IMR-90 (cell line): ENCODE measurements at regions of chr1 and their contacts with region 1.

Region 1: GRCh38 chr1:20696397-20697329 is 21.1 kb downstream of the KIF17 start:
- DNase-seq: peak; percentile 94
- ATAC-seq: peak; percentile 92
- H3K4me3 ChIP-seq: peak overlapping the region; percentile 52
- H3K27ac ChIP-seq: peak overlapping the region; percentile 88
- H3K4me1 ChIP-seq: peaks cover 14% of the 10 kb centered on the region
- H3K27me3 ChIP-seq: no peaks in the 10 kb centered on the region
- CTCF ChIP-seq: peak; percentile 82
- POLR2A ChIP-seq: no peak
- RAD21 ChIP-seq: peak; percentile 88

Region 2: DNA sequence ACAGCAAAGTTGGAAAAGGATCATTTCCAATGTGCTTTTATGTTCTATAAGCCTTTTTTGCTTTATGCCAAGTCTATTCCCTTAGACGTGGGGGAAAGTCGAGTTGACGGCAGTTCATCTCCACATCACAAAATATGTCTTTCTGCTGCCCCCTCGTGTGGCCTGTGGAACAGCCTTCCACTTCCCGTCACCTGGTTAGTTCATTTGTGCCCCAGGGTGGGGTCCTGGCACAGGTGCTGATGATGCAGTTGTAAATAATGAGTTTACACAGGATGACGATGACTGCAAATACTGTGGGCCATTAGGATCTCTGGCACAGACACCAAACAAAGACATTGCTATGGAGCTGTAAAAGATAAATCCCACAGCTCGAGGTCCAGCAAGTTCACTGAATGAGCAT is 824.5 kb before region 1 on chr1:
- CTCF ChIA-PET with region 1: no interaction called
- POLR2A ChIA-PET with region 1: no interaction called
- dilution Hi-C with region 1: no loop called
- in situ Hi-C with region 1: no loop called
- intact Hi-C with region 1: no loop called
- DNase-seq: no peak
- ATAC-seq: no peak
- H3K4me3 ChIP-seq: no peak overlapping the region
- H3K27ac ChIP-seq: no peak overlapping the region
- H3K4me1 ChIP-seq: peaks cover 2% of the 10 kb centered on the region; the same call in 1 of the 2 replicates
- H3K27me3 ChIP-seq: peaks cover 2% of the 10 kb centered on the region; the same call in 1 of the 2 replicates
- CTCF ChIP-seq: no peak
- POLR2A ChIP-seq: no peak
- RAD21 ChIP-seq: no peak

Region 3: DNA sequence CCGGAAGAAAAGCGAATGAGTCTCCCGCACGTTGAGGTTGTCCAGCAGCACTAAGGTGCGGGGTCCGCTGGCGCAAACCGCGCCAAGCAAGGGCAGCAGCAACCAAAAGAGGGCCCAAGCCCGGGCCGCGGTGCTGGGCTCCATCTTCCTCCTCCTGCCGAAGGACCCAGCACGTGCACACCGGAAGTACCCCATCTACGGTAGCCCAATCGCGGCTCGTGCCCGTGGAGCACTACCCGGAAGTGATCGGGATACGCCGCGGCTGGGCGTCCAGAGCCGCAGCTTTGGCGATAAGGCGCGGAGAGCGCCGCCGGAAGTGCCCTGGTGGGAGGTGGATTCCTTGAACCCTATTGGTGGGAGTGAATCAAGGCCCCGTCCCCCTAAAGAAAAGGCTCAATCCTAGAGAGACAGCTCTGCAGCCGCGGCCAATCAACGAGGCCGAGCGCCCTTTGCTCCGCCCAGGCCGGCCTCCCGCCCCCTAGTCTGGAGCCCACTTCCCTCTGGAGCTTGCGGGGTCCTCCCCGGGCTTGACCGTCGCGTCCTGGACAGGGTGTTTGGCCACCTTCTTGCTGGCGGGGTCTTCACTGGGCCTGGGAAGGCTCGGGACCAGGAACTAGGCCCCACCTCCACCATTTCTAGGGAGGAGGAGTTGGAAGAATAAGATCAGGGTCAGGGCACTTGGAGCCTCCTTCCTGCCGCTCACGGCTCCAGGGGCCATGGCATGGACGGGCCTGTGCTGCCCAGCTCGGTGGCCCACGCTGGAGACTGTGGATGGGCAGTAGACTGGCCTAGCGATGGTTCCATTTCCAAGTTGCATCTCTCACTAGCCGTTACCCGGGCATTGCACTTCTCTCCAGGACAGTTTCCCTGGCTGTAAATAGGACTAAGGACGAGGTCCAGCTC is 35.2 kb before region 1 on chr1 and contains the start of gene DDOST:
- CTCF ChIA-PET with region 1: no interaction called
- POLR2A ChIA-PET with region 1: no interaction called
- dilution Hi-C with region 1: no loop called
- in situ Hi-C with region 1: no loop called
- intact Hi-C with region 1: loop called (anchors 1 kb)
- DNase-seq: peak; percentile 97
- ATAC-seq: peak; percentile 98
- H3K4me3 ChIP-seq: peak within 1 kb of the TSS; percentile 75
- H3K27ac ChIP-seq: peak within 1 kb of the TSS; percentile 87
- H3K4me1 ChIP-seq: peaks cover 4% of the 10 kb centered on the region
- H3K27me3 ChIP-seq: no peaks in the 10 kb centered on the region
- CTCF ChIP-seq: peak; percentile 70
- POLR2A ChIP-seq: peak; percentile 35; the same call in 1 of the 2 replicates
- RAD21 ChIP-seq: no peak
- total RNA-seq, gene DDOST: 155 and 179 TPM in 2 replicates

Region 4: DNA sequence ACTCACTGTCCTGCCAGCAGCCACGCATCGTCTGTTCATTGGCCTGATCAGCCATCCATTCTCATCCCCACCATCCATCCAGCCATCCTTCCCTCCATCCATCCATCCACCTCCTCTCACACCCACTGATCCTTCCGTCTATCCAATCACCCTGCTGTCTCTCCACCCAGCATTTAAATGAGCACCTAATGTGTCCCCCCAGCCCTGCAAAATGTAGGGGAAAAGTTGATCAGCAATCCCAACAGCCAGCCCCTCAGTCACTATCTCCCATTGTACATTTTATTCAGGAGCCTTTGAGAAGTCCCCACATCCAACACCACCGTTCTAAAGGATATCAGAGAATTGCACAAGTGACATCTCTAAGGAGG is 24.4 kb before region 1 on chr1:
- CTCF ChIA-PET with region 1: no interaction called
- POLR2A ChIA-PET with region 1: no interaction called
- dilution Hi-C with region 1: no loop called
- in situ Hi-C with region 1: no loop called
- intact Hi-C with region 1: no loop called
- DNase-seq: no peak
- ATAC-seq: no peak
- H3K4me3 ChIP-seq: no peak overlapping the region
- H3K27ac ChIP-seq: no peak overlapping the region
- H3K4me1 ChIP-seq: no peaks in the 10 kb centered on the region
- H3K27me3 ChIP-seq: no peaks in the 10 kb centered on the region
- CTCF ChIP-seq: no peak
- POLR2A ChIP-seq: no peak
- RAD21 ChIP-seq: no peak

Region 5: GRCh38 chr1:20739225-20739624 is 42.6 kb after region 1 on chr1:
- CTCF ChIA-PET with region 1: interaction called, 7 read pairs
- POLR2A ChIA-PET with region 1: no interaction called
- dilution Hi-C with region 1: no loop called
- in situ Hi-C with region 1: no loop called
- intact Hi-C with region 1: loop called (anchors 2 kb)
- DNase-seq: peak; percentile 86
- ATAC-seq: peak; percentile 81
- H3K4me3 ChIP-seq: no peak overlapping the region
- H3K27ac ChIP-seq: peak overlapping the region; percentile 93
- H3K4me1 ChIP-seq: peaks cover 14% of the 10 kb centered on the region
- H3K27me3 ChIP-seq: no peaks in the 10 kb centered on the region
- CTCF ChIP-seq: no peak
- POLR2A ChIP-seq: no peak
- RAD21 ChIP-seq: no peak

Region 6: DNA sequence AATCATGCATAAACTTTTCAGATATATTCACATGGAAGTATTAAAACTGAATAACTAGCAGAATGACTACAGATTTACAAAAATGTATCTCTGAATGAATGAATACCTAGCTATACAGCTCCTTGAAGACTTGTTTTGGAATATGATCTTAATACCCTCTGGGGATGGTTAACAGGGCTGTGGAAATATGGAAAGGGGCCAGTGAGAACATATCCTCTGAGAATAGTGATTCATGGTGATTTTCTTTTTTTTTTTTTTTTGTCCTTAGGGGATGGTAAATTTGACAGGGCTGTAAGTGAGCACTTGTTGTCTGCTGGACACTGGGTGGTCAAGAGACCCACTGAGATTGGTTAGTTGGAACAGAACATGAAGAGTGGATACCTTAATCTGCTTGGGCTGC is 171.2 kb after region 1 on chr1:
- CTCF ChIA-PET with region 1: no interaction called
- POLR2A ChIA-PET with region 1: no interaction called
- dilution Hi-C with region 1: no loop called
- in situ Hi-C with region 1: no loop called
- intact Hi-C with region 1: loop called (anchors 5 kb)
- DNase-seq: peak; percentile 53
- ATAC-seq: no peak
- H3K4me3 ChIP-seq: no peak overlapping the region
- H3K27ac ChIP-seq: no peak overlapping the region
- H3K4me1 ChIP-seq: peaks cover 13% of the 10 kb centered on the region
- H3K27me3 ChIP-seq: no peaks in the 10 kb centered on the region
- CTCF ChIP-seq: no peak
- POLR2A ChIP-seq: no peak
- RAD21 ChIP-seq: no peak

Region 7: DNA sequence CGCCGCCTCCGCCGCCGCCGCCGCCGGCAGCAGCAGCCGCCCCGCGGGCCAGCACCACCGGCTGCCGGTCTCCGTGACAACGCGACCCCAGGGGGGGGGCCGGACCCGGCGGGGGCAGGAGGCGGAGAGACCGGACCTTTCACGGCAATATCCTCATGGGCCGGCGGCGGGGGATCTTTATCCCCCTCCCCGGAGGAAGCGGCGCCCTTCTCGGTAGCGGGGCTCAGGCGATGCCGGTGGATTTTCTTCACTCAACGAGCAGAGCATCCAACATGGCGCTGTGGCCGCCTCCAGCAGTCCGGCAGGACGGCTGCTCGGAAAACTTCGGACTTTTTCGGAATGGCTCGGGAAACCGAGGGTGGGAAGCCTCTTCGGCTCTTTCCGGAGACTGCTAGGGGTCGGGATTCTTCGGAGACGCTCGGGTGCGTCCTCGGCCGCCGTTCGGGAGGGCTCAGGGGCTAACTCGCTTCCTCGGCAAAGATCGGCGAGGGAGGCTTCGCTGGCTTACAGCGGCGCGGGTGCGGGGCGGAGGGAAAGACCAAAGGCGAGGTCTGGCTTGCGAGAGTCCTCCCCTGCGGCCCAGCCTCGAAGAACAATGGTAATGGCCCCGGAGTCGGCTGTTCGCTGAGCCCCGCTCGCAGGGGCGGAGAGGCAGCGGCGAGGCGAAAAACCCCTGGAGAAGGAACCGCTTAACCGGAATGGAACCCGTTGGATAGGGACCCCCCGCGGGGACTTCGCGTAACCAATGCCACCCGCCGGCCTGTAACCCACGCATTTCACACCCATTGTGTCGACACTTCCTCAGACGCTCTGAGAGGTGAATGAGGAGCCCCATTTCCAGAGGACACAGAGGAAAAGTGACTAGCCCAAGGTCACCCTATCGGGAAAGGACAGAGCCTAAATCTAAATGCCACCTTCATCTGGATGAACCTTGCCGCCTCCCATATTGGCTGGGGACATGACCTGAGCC is 480.2 kb after region 1 on chr1 and contains the start of gene EIF4G3:
- CTCF ChIA-PET with region 1: no interaction called
- POLR2A ChIA-PET with region 1: no interaction called
- dilution Hi-C with region 1: no loop called
- in situ Hi-C with region 1: no loop called
- intact Hi-C with region 1: loop called (anchors 5 kb)
- DNase-seq: peak; percentile 94
- ATAC-seq: peak; percentile 97
- H3K4me3 ChIP-seq: peak within 1 kb of the TSS; percentile 97
- H3K27ac ChIP-seq: peak within 1 kb of the TSS; percentile 92
- H3K4me1 ChIP-seq: peaks cover 3% of the 10 kb centered on the region; the same call in 1 of the 2 replicates
- H3K27me3 ChIP-seq: no peaks in the 10 kb centered on the region
- CTCF ChIP-seq: no peak
- POLR2A ChIP-seq: peak; percentile 90
- RAD21 ChIP-seq: no peak
- total RNA-seq, gene EIF4G3: 25.8 and 29.2 TPM in 2 replicates

Region 8: DNA sequence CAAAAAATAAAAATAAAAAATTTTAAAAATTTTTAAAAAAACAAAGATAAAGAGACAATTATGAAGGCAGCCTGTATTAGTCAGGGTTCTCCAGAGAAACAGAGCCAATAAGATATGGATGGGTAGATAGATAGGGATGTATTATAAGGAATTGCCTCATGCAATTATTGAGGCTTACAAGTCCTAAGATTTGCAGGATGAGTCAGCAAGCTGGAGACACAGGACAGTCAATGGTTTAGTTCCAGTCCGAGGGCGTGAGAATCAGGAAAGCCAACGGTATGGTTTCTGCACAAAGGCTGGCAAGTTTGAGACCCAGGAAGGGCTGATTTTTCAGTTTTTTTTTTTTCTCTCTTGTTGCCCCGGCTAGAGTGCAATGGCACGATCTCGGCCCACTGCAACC is 504.1 kb after region 1 on chr1:
- CTCF ChIA-PET with region 1: interaction called, 17 read pairs
- POLR2A ChIA-PET with region 1: no interaction called
- dilution Hi-C with region 1: no loop called
- in situ Hi-C with region 1: loop called (anchors 5 kb)
- intact Hi-C with region 1: loop called (anchors 1 kb)
- DNase-seq: peak; percentile 62
- ATAC-seq: peak; percentile 43; the same call in 1 of the 2 replicates
- H3K4me3 ChIP-seq: no peak overlapping the region
- H3K27ac ChIP-seq: no peak overlapping the region
- H3K4me1 ChIP-seq: no peaks in the 10 kb centered on the region
- H3K27me3 ChIP-seq: no peaks in the 10 kb centered on the region
- CTCF ChIP-seq: no peak
- POLR2A ChIP-seq: no peak
- RAD21 ChIP-seq: no peak

Region 9: DNA sequence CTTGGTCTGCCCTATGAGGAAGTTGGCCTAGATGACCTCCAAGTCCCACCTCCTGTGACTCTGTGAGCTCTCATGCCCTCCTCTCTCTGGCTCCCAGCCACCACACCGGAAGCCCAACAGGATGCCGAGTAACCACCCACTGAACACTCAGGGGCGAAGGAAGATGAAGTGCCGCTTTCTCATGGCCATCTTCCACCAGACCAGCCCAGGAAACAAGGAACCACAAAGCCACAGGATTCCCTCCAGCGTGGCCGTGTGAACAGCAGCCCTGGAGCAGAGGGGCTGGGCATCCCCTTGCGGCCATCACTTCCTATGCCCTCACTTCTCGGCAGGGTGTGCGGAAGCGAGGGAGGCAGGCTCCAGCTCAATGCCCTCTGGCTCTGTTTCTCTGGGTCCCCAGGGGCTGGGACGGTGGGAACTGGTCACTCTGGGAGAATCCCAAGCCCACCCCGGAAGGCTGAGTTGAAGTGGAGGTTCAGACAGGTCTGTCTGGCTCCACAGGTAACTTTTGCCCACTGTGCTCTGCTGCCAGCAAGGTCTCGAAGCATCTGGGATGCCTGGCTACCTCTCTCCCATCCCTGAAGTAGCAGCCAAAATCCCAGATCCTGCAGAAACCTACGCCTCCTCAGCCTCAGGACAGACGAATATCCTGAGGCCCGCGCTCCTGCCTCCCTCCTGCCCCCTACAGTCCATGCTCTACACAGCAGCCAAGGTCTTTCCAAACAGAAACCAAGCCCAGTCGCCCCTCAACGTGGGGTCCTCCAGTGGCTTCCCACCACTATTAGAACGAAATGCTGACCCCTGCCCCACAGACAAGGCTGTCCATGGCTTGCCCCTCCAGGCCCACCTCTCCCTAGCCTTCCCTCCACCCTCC is 637.8 kb after region 1 on chr1:
- CTCF ChIA-PET with region 1: no interaction called
- POLR2A ChIA-PET with region 1: no interaction called
- dilution Hi-C with region 1: no loop called
- in situ Hi-C with region 1: no loop called
- intact Hi-C with region 1: loop called (anchors 5 kb)
- DNase-seq: peak; percentile 86
- ATAC-seq: peak; percentile 74
- H3K4me3 ChIP-seq: peak overlapping the region; percentile 31
- H3K27ac ChIP-seq: peak overlapping the region; percentile 74
- H3K4me1 ChIP-seq: peaks cover 54% of the 10 kb centered on the region
- H3K27me3 ChIP-seq: no peaks in the 10 kb centered on the region
- CTCF ChIP-seq: peak; percentile 86
- POLR2A ChIP-seq: 0 out of 2 replicates have a peak, but pooled peaks have one; percentile 32
- RAD21 ChIP-seq: peak; percentile 77